Heart left ventricle (tissue), 16 donors: ENCODE measurements at regions of chr6 and their contacts with region 1.

Region 1: GRCh38 chr6:27132532-27133280 is 114.8 kb upstream of the PRSS16 start:
- DNase-seq: peak; percentile 81 to 89 (median 86)
- ATAC-seq: peak; percentile 94 to 98 (median 97)
- H3K4me3 ChIP-seq: peak overlapping the region; percentile 15 to 68 (median 60)
- H3K27ac ChIP-seq: peak overlapping the region; percentile 34 to 91 (median 80)
- H3K4me1 ChIP-seq: peaks cover 0 to 46% (median 8%) of the 10 kb centered on the region in 12 donors
- H3K27me3 ChIP-seq: no peaks in the 10 kb centered on the region
- CTCF ChIP-seq: no peak
- POLR2A ChIP-seq: peak; percentile 53 to 97

Region 2: DNA sequence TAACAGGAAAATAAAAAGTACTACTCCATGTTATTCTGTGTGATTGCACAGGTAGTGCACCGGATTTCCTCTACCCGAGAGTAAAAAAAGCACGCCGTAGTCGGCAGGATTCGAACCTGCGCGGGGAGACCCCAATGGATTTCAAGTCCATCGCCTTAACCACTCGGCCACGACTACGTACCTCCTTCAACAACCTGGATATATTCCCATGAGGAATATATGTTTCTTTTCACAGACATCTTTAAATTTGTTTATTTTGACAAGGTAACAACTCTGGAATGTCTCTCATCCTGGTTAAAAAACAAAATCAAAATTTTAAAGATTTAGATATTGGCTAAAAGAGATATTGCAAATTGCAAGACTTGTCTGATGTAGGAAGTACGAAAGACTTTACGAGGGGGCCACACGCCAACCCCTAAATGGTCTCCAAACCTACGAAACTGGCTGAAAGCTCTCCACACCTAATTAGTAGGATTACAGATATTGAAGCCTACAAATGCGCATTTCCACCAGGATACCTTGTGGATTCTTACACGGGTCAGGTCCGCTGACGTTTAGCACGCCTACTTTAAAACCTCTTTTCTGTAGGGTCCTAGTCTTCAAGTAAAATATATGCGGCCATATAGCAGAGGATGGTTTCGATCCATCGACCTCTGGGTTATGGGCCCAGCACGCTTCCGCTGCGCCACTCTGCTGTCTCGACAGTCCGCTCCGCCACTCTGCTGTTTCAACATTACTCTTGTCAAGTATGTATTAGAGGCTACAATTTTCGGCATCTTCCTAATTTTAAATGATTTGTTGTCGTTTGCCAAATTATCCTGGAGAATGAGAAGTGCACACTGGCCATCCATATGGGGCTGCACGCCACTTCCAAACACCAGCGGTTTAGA is 820.0 kb before region 1 on chr6:
- intact Hi-C with region 1: loop called in 1 of 10 experiments (anchors 10 kb)
- DNase-seq: peak; percentile 60 to 80 (median 75)
- ATAC-seq: peak; percentile 77 to 93 (median 88)
- H3K4me3 ChIP-seq: peak overlapping the region; percentile 12 to 66 (median 50)
- H3K27ac ChIP-seq: peak overlapping the region in 9 of 12 donors; percentile 4 to 67 (median 27)
- H3K4me1 ChIP-seq: peaks cover 0 to 27% (median 7%) of the 10 kb centered on the region in 12 donors
- H3K27me3 ChIP-seq: peaks cover 0 to 11% (median 0%) of the 10 kb centered on the region in 9 donors
- CTCF ChIP-seq: no peak
- POLR2A ChIP-seq: no peak

Region 3: DNA sequence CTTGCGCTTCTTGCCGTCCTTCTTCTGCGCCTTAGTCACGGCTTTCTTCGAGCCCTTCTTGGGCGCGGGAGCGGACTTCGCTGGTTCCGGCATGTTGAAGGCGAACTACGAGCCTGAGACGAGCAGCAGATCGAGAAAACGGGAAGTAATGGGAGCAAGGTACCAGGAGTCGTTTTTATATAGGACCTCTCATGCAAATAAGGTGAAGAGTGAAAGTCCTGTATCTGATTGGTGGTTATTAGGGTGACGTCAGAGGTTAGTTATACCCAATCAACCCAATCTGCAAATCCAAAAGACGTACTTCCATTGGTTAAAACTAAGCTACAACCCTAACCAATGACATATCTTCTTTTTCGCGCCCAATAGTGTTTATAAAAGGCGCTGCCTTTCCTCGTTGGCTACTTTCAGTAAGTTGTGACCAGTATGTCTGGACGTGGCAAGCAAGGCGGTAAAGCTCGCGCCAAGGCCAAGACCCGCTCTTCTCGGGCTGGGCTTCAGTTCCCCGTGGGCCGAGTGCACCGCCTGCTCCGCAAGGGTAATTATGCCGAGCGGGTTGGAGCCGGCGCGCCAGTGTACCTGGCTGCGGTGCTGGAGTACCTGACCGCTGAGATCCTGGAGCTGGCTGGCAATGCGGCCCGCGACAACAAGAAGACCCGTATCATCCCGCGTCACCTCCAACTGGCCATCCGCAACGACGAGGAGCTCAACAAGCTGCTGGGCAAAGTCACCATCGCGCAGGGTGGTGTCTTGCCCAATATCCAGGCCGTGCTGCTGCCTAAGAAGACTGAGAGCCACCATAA is 14.2 kb after region 1 on chr6:
- intact Hi-C with region 1: loop called in 3 of 10 experiments (anchors 1 to 2 kb)
- DNase-seq: peak; percentile 73 to 84 (median 79)
- ATAC-seq: peak; percentile 95 to 98 (median 96)
- H3K4me3 ChIP-seq: peak overlapping the region; percentile 30 to 79 (median 65)
- H3K27ac ChIP-seq: peak overlapping the region; percentile 77 to 98 (median 90)
- H3K4me1 ChIP-seq: peaks cover 0 to 37% (median 11%) of the 10 kb centered on the region in 12 donors
- H3K27me3 ChIP-seq: no peaks in the 10 kb centered on the region
- CTCF ChIP-seq: no peak
- POLR2A ChIP-seq: peak; percentile 15 to 96

Region 4: GRCh38 chr6:27168586-27169443 is 36.1 kb after region 1 on chr6:
- intact Hi-C with region 1: no loop called
- DNase-seq: no peak
- ATAC-seq: no peak
- H3K4me3 ChIP-seq: no peak overlapping the region
- H3K27ac ChIP-seq: no peak overlapping the region
- H3K4me1 ChIP-seq: no peaks in the 10 kb centered on the region
- H3K27me3 ChIP-seq: no peaks in the 10 kb centered on the region
- CTCF ChIP-seq: no peak
- POLR2A ChIP-seq: no peak

Region 5: DNA sequence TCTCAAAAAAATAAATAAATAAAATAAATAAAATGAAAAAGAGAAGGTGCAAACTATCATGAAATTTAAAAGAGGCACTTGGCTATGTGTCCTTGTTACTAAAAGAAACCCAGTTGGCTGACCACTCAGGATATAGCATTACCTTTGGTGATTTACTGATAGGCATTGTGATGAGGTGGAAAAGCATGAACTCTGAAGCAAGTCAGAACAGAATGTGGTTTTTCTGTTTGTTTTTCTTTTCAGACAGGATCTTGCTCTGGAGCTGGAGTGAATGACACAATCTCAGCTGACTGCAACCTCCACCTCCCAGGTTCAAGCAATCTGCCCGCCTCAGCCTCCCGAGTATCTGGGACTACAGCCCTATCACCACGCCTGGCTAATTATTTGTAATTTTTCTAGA is 308.3 kb after region 1 on chr6:
- intact Hi-C with region 1: no loop called
- DNase-seq: no peak
- ATAC-seq: no peak
- H3K4me3 ChIP-seq: no peak overlapping the region
- H3K27ac ChIP-seq: no peak overlapping the region
- H3K4me1 ChIP-seq: no peaks in the 10 kb centered on the region
- H3K27me3 ChIP-seq: no peaks in the 10 kb centered on the region
- CTCF ChIP-seq: no peak
- POLR2A ChIP-seq: no peak

Region 6: DNA sequence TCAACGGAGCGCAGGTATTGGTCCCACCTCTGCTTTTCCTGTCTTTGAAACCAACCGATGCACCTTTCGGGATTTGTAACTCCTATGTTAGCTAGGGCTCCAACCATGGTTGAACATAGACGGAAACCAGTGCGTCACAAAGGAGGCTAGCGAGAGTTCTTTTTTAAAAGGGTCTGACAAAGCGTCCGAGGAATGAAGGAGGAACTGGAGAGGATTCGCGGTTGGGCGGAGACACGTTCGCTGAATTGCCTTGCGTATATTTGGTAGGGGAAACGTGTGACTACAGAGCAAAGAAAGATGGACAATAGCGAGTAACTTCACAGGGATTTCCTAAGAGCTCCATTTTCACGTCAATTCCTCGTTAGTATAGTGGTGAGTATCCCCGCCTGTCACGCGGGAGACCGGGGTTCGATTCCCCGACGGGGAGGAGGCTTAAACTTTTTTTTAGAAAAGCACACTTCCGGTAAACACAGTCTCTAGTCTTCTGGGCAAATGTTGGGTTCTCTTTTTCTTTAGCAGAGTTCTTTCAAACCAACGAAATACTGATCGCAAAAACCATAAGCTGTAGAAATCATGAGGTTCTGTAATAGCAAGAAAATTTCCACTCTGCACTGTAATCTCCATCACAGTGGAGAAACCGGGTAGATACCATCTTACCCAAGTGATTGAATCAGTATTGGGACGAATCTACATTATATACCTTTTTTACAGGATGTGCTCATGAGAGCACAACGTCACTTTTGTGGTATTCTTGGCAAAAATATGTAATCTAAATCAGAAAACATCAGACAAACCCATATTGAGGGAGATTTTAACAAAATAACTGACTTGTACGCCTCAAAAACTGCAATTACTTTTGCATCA is 346.8 kb after region 1 on chr6:
- intact Hi-C with region 1: loop called in 1 of 10 experiments (anchors 5 kb)
- DNase-seq: peak; percentile 51 to 89 (median 76)
- ATAC-seq: peak; percentile 89 to 95 (median 94)
- H3K4me3 ChIP-seq: peak overlapping the region; percentile 70 to 96 (median 76)
- H3K27ac ChIP-seq: peak overlapping the region; percentile 92 to 100 (median 96)
- H3K4me1 ChIP-seq: peaks cover 0 to 15% (median 10%) of the 10 kb centered on the region in 12 donors
- H3K27me3 ChIP-seq: no peaks in the 10 kb centered on the region
- CTCF ChIP-seq: no peak
- POLR2A ChIP-seq: peak in 1 of 2 donors; percentile 24

Region 7: DNA sequence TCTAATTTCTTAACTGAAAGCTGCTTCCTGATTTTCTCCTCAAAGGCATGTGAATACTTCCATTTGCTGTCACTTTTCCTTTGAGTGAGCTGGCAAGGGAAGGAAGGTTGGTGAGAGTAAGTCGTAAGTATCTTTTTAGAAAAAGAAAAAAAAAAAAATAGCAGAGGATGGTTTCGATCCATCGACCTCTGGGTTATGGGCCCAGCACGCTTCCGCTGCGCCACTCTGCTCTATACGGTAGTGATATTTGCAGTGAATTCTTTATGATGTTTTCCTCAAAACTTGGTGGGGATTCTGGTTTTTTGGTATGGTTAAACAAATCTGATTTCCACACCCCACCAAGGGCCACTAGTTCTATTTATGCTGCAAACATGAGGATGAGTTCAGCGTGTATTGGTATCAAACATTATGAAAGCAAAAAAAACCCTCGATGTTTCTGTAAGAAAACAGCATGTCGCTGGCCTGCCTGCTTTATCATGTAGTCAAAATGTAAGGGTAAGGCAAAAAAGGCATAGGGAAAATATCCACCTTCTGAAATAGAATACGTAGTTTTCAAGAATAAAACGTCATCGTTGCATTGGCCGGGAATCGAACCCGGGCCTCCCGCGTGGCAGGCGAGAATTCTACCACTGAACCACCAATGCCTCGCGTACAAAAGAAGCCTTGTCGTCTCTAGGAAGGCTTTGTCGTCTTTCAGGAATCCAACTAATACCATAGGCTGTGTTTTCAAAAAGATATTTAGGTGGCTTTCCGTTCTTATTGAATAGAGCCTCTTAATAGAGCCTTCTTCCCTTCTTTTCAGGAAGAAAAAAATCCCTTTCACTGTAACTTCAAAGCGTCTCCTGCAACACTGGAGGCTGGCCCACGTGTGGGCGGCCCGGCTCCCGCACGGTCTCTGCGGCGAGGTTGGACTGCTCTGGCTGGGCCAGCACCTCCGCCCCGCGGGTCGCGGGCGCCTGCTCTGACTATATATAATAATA is 769.9 kb after region 1 on chr6:
- intact Hi-C with region 1: loop called in 2 of 10 experiments (anchors 5 to 10 kb)
- DNase-seq: peak; percentile 73 to 86 (median 83)
- ATAC-seq: peak; percentile 90 to 96 (median 96)
- H3K4me3 ChIP-seq: peak overlapping the region; percentile 30 to 71 (median 60)
- H3K27ac ChIP-seq: peak overlapping the region in 11 of 12 donors; percentile 36 to 90 (median 76)
- H3K4me1 ChIP-seq: peaks cover 0 to 14% (median 2%) of the 10 kb centered on the region in 12 donors
- H3K27me3 ChIP-seq: no peaks in the 10 kb centered on the region
- CTCF ChIP-seq: no peak
- POLR2A ChIP-seq: no peak